Caki2 (cell line): ENCODE measurements at regions of chr17 and their contacts with region 1.

Region 1: GRCh38 chr17:48804925-48805411 is 12.1 kb downstream of the TTLL6 start:
- DNase-seq: peak; percentile 68

Region 2: GRCh38 chr17:48738803-48739526 is 66.0 kb before region 1 on chr17:
- in situ Hi-C with region 1: loop called (anchors 10 kb)
- DNase-seq: no peak

Region 3: GRCh38 chr17:49045376-49045775 is 240.4 kb after region 1 on chr17:
- in situ Hi-C with region 1: loop called (anchors 10 kb)
- DNase-seq: no peak